ENCODE measurements at regions of chr4 and their contacts with region 1.

Region 1: GRCh38 chr4:6278801-6279197 is 9.1 kb downstream of the WFS1 start:
- DNase-seq: peak; percentile 42
- ATAC-seq: peak; percentile 94
- H3K4me3 ChIP-seq: no peak overlapping the region
- H3K27ac ChIP-seq: no peak overlapping the region
- H3K4me1 ChIP-seq: peaks cover 15% of the 10 kb centered on the region
- H3K27me3 ChIP-seq: no peaks in the 10 kb centered on the region; a peak in 1 of 4 replicates
- CTCF ChIP-seq: no peak
- EP300 ChIP-seq: peak in 1 of 2 experiments; percentile 39; a peak in 2 of 4 replicates
- POLR2A ChIP-seq: no peak
- RAD21 ChIP-seq: no peak

Region 2: DNA sequence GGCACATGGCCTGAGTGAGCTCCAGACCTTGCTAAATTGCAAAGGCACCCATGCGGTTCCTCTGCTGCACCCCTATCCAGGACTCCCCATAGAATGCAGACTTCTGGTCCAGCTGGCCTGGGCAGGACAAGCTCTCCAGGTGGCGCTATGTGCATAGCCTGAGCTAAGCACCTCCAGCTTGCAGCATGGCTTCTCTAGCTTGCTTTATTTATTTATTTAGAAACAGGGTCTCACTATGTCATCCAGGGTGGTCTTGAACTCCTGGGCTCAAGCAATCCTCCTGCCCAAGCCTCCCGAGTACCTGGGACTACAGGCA is 14.6 kb before region 1 on chr4:
- CTCF ChIA-PET with region 1: interaction called, 17 read pairs
- POLR2A ChIA-PET with region 1: interaction called, 4 read pairs
- RAD21 ChIA-PET with region 1: interaction called, 8 read pairs
- SMC1A ChIA-PET with region 1: interaction called, 4 read pairs
- in situ Hi-C with region 1: no loop called
- intact Hi-C with region 1: no loop called
- DNase-seq: no peak
- ATAC-seq: peak; percentile 83
- H3K4me3 ChIP-seq: no peak overlapping the region
- H3K27ac ChIP-seq: no peak overlapping the region
- H3K4me1 ChIP-seq: peaks cover 15% of the 10 kb centered on the region
- H3K27me3 ChIP-seq: no peaks in the 10 kb centered on the region
- CTCF ChIP-seq: peak; percentile 57 to 64 (median 59)
- EP300 ChIP-seq: no peak
- POLR2A ChIP-seq: no peak
- RAD21 ChIP-seq: peak; percentile 80

Region 3: GRCh38 chr4:6319530-6320150 is 40.8 kb after region 1 on chr4:
- CTCF ChIA-PET with region 1: interaction called, 11 read pairs
- POLR2A ChIA-PET with region 1: no interaction called
- RAD21 ChIA-PET with region 1: interaction called, 10 read pairs
- SMC1A ChIA-PET with region 1: interaction called, 8 read pairs
- in situ Hi-C with region 1: no loop called
- intact Hi-C with region 1: no loop called
- DNase-seq: no peak
- ATAC-seq: no peak
- H3K4me3 ChIP-seq: no peak overlapping the region
- H3K27ac ChIP-seq: no peak overlapping the region
- H3K4me1 ChIP-seq: no peaks in the 10 kb centered on the region
- H3K27me3 ChIP-seq: peaks cover 0 to under 1% of the 10 kb centered on the region in 2 experiments; a peak in 3 of 4 replicates
- CTCF ChIP-seq: no peak
- EP300 ChIP-seq: no peak
- POLR2A ChIP-seq: no peak
- RAD21 ChIP-seq: no peak

Region 4: GRCh38 chr4:6509587-6509986 is 230.8 kb after region 1 on chr4:
- CTCF ChIA-PET with region 1: no interaction called
- POLR2A ChIA-PET with region 1: no interaction called
- RAD21 ChIA-PET with region 1: no interaction called
- SMC1A ChIA-PET with region 1: no interaction called
- in situ Hi-C with region 1: no loop called
- intact Hi-C with region 1: no loop called
- DNase-seq: no peak
- ATAC-seq: no peak
- H3K4me3 ChIP-seq: no peak overlapping the region
- H3K27ac ChIP-seq: no peak overlapping the region
- H3K4me1 ChIP-seq: no peaks in the 10 kb centered on the region
- H3K27me3 ChIP-seq: no peaks in the 10 kb centered on the region
- CTCF ChIP-seq: no peak
- EP300 ChIP-seq: no peak
- POLR2A ChIP-seq: no peak
- RAD21 ChIP-seq: no peak

Measured in GM12878 (cell line).